GM13976 (cell line): ENCODE measurements at regions of chr18 and their contacts with region 1.

Region 1: GRCh38 chr18:77067291-77068061 is 65.1 kb downstream of the MBP start:
- DNase-seq: no peak
- CTCF ChIP-seq: peak; percentile 17

Region 2: GRCh38 chr18:76850112-76850511 is 217.4 kb before region 1 on chr18:
- in situ Hi-C with region 1: no loop called
- DNase-seq: no peak
- CTCF ChIP-seq: no peak

Region 3: GRCh38 chr18:77127769-77128671 is 60.5 kb after region 1 on chr18:
- in situ Hi-C with region 1: loop called (anchors 10 kb)
- DNase-seq: no peak
- CTCF ChIP-seq: no peak